Mammary epithelial cell (primary cell): ENCODE measurements at regions of chr1 and their contacts with region 1.

Region 1: DNA sequence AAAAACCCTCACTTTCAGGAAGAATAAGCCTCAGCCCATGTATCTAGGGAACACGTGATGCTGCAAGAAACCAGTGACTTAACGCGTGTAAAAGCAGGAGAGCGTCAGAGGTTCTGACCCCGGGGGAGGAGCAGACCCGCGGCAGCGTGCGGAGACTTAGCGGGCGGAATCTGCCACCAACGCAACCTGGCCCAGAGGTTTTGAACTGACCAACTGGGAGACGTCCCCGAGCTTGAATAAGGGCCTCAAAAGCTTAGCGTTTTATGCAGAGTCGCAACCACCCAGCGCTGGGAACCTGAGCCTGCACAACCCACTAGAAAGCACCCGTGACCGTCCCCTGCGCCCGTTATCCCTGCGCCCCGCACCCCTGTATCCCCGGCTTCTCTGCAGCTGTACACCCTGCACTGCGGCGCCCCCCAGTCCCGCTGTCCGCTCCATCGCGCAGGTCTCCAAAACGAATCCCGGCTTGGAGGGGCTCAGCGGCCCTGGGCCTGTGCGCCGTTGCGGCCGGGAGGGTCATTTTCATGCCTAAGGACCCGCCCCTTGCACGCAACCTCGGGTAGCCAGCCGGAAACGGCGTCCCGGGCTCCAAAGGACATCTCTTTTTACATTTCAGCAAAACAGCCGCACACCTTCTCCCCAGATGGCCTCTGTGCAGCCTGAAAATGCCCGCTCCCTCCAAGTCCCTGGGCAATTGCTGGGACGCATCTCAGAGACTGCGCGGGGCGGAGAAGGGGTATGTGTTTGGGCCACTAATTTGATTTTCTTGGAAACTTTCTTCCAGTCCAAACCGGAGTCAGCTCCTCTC is 29.4 kb upstream of the TRIM17 start:
- DNase-seq: no peak
- H3K4me3 ChIP-seq: peak overlapping the region; percentile 0 to 35 (median 34)
- H3K27ac ChIP-seq: no peak overlapping the region
- H3K4me1 ChIP-seq: peaks cover 9% of the 10 kb centered on the region
- H3K27me3 ChIP-seq: peaks cover 3% of the 10 kb centered on the region
- CTCF ChIP-seq: no peak

Region 2: GRCh38 chr1:228241259-228241658 is 204.8 kb before region 1 on chr1:
- CTCF ChIA-PET with region 1: no interaction called
- dilution Hi-C with region 1: loop called (anchors 10 kb)
- in situ Hi-C with region 1: no loop called
- intact Hi-C with region 1: no loop called
- DNase-seq: no peak
- H3K4me3 ChIP-seq: no peak overlapping the region
- H3K27ac ChIP-seq: no peak overlapping the region
- H3K4me1 ChIP-seq: no peaks in the 10 kb centered on the region
- H3K27me3 ChIP-seq: no peaks in the 10 kb centered on the region
- CTCF ChIP-seq: no peak

Region 3: DNA sequence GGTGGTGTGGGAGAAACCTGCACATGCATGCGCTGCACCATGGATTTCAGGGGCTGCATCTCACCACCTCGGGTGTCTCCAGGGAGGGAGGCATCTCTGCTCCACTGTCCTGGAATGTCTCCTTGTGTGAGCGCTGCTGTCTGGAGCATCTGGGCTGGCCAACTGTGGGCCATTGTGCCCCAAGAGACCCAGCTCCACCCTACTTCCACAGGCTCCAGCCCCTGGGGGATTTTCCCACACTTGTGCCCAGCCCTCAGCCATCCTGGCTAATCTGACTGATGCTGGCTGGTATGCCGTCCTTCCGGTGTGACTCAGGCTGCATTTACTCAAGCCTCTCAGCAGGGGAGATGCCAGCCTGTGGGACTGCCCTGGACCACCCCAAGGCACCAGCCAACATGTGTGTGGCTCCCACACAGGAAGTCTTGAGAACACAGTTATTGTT is 101.4 kb before region 1 on chr1:
- CTCF ChIA-PET with region 1: no interaction called
- dilution Hi-C with region 1: loop called (anchors 5 kb)
- in situ Hi-C with region 1: no loop called
- intact Hi-C with region 1: no loop called
- DNase-seq: peak; percentile 5
- H3K4me3 ChIP-seq: no peak overlapping the region
- H3K27ac ChIP-seq: no peak overlapping the region
- H3K4me1 ChIP-seq: no peaks in the 10 kb centered on the region
- H3K27me3 ChIP-seq: no peaks in the 10 kb centered on the region
- CTCF ChIP-seq: no peak

Region 4: GRCh38 chr1:228387321-228387720 is 58.7 kb before region 1 on chr1:
- CTCF ChIA-PET with region 1: no interaction called
- dilution Hi-C with region 1: loop called (anchors 5 kb)
- in situ Hi-C with region 1: no loop called
- intact Hi-C with region 1: no loop called
- DNase-seq: no peak
- H3K4me3 ChIP-seq: no peak overlapping the region
- H3K27ac ChIP-seq: no peak overlapping the region
- H3K4me1 ChIP-seq: no peaks in the 10 kb centered on the region
- H3K27me3 ChIP-seq: no peaks in the 10 kb centered on the region
- CTCF ChIP-seq: no peak

Region 5: GRCh38 chr1:228420963-228421826 is 24.9 kb before region 1 on chr1:
- CTCF ChIA-PET with region 1: no interaction called
- dilution Hi-C with region 1: no loop called
- in situ Hi-C with region 1: no loop called
- intact Hi-C with region 1: no loop called
- DNase-seq: peak; percentile 33
- H3K4me3 ChIP-seq: no peak overlapping the region
- H3K27ac ChIP-seq: no peak overlapping the region
- H3K4me1 ChIP-seq: peaks cover 18% of the 10 kb centered on the region
- H3K27me3 ChIP-seq: no peaks in the 10 kb centered on the region
- CTCF ChIP-seq: no peak

Region 6: GRCh38 chr1:228486596-228487335 is 40.7 kb after region 1 on chr1:
- CTCF ChIA-PET with region 1: no interaction called
- dilution Hi-C with region 1: no loop called
- in situ Hi-C with region 1: no loop called
- intact Hi-C with region 1: no loop called
- DNase-seq: peak; percentile 88
- H3K4me3 ChIP-seq: peak overlapping the region; percentile 38 to 76 (median 71)
- H3K27ac ChIP-seq: peak overlapping the region; percentile 85
- H3K4me1 ChIP-seq: peaks cover 11% of the 10 kb centered on the region
- H3K27me3 ChIP-seq: no peaks in the 10 kb centered on the region
- CTCF ChIP-seq: no peak

Region 7: GRCh38 chr1:228927946-228928898 is 482.2 kb after region 1 on chr1:
- CTCF ChIA-PET with region 1: no interaction called
- dilution Hi-C with region 1: no loop called
- in situ Hi-C with region 1: no loop called
- intact Hi-C with region 1: no loop called
- DNase-seq: no peak
- H3K4me3 ChIP-seq: no peak overlapping the region
- H3K27ac ChIP-seq: no peak overlapping the region
- H3K4me1 ChIP-seq: no peaks in the 10 kb centered on the region
- H3K27me3 ChIP-seq: peaks cover 2% of the 10 kb centered on the region
- CTCF ChIP-seq: no peak

Region 8: GRCh38 chr1:230163205-230163604 is 1717.2 kb after region 1 on chr1:
- CTCF ChIA-PET with region 1: no interaction called
- dilution Hi-C with region 1: no loop called
- in situ Hi-C with region 1: no loop called
- intact Hi-C with region 1: no loop called
- DNase-seq: peak; percentile 12
- H3K4me3 ChIP-seq: no peak overlapping the region
- H3K27ac ChIP-seq: no peak overlapping the region
- H3K4me1 ChIP-seq: peaks cover 11% of the 10 kb centered on the region
- H3K27me3 ChIP-seq: no peaks in the 10 kb centered on the region
- CTCF ChIP-seq: no peak